Endothelial cell of umbilical vein (primary cell): ENCODE measurements at regions of chr4 and their contacts with region 1.

Region 1: DNA sequence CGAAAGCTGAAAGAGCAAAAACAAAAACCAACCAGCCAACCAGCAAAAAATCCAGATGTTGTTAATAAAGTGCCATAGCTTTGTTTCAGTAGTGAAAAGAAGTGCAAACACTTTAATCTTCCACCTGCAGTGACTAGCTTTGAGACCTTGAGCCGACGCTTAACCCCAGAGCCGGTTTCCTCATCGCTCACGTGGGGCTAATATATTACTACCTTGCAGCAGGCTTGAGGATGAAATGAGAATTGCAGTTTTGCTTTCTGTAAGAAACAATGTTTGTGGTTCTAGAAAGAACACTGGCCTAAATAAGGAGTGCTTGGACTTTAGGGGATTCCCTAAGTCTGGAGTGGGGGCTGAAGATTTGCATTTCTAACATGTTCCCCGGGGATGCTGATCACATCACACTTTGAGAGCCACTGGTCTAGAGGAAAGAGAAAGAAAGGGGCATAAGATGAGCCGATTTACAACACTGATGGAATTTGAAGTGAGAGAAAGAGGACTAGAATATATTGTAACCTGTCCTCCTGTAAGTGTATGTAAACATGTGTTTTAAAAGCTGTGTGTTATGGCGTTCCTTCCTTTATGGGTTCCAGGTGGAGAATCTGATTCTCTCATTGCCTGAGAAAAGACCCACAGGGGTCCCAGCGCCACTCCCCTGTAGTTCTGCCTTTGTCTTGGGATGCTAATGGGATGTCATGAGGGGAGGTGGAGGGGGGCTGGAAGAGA is 1.4 kb downstream of the FGF2 start:
- DNase-seq: peak; percentile 71
- H3K4me3 ChIP-seq: peak overlapping the region; percentile 74 to 86 (median 75)
- H3K27ac ChIP-seq: peak overlapping the region; percentile 2
- H3K4me1 ChIP-seq: peaks cover 8% of the 10 kb centered on the region
- H3K27me3 ChIP-seq: no peaks in the 10 kb centered on the region
- CTCF ChIP-seq: no peak
- POLR2A ChIP-seq: no peak

Region 2: GRCh38 chr4:122764821-122765215 is 63.2 kb before region 1 on chr4:
- CTCF ChIA-PET with region 1: interaction called, 3 read pairs
- POLR2A ChIA-PET with region 1: no interaction called
- dilution Hi-C with region 1: no loop called
- intact Hi-C with region 1: loop called (anchors 2 kb)
- DNase-seq: peak; percentile 44
- H3K4me3 ChIP-seq: no peak overlapping the region
- H3K27ac ChIP-seq: peak overlapping the region; percentile 58
- H3K4me1 ChIP-seq: peaks cover 16% of the 10 kb centered on the region
- H3K27me3 ChIP-seq: no peaks in the 10 kb centered on the region
- CTCF ChIP-seq: no peak
- POLR2A ChIP-seq: no peak

Region 3: DNA sequence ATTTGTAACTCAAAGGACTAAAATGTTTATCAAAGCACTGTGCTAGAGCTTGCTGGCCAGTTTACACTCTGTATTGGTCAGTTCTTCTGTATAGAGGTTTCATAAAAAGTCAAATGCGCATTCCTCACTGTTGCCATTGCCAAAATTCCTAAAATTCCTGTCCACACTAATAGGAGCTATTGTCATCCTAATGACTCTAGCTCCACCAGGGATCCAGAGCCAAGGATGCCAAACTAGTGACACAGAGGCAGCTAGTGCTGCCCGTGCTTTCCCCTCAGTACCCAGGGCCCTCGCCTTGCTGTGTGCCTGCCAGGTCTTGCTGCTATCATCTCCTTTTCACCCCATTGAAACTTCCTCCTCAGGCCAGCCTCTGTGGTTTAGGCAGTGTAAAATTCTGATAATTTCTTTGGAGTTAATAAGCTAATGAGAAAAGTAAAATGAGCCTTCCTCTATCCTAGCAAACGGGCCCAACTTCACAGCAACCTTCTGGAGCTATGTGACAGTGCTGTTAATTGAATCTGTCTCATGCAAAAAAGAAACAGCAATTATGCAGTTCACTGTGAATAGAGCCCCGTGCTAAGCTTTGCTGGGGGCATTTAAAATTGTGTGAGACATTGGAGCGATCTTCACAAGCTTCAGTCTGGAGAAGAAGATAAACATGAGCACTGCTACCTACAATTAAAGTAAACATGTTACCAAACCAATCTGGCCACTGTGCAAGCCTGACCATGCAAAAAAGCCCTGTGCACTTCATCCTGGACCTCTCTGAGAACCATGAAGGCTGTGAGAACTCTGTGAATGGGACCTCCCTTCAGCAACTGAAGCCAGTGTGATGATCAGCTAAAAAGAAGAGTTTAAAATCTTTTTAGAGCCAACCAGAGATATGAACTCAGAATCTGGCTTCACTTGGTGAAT is 44.5 kb before region 1 on chr4:
- CTCF ChIA-PET with region 1: no interaction called
- POLR2A ChIA-PET with region 1: no interaction called
- dilution Hi-C with region 1: no loop called
- intact Hi-C with region 1: loop called (anchors 1 kb)
- DNase-seq: peak; percentile 86
- H3K4me3 ChIP-seq: no peak overlapping the region
- H3K27ac ChIP-seq: peak overlapping the region; percentile 64
- H3K4me1 ChIP-seq: peaks cover 20% of the 10 kb centered on the region
- H3K27me3 ChIP-seq: no peaks in the 10 kb centered on the region
- CTCF ChIP-seq: no peak
- POLR2A ChIP-seq: peak; percentile 13

Region 4: GRCh38 chr4:122798101-122798500 is 29.9 kb before region 1 on chr4:
- CTCF ChIA-PET with region 1: interaction called, 4 read pairs
- POLR2A ChIA-PET with region 1: no interaction called
- dilution Hi-C with region 1: no loop called
- intact Hi-C with region 1: loop called (anchors 2 kb)
- DNase-seq: peak; percentile 84
- H3K4me3 ChIP-seq: no peak overlapping the region
- H3K27ac ChIP-seq: peak overlapping the region; percentile 58
- H3K4me1 ChIP-seq: peaks cover 7% of the 10 kb centered on the region
- H3K27me3 ChIP-seq: no peaks in the 10 kb centered on the region
- CTCF ChIP-seq: peak in 1 of 2 donors; percentile 2
- POLR2A ChIP-seq: no peak

Region 5: DNA sequence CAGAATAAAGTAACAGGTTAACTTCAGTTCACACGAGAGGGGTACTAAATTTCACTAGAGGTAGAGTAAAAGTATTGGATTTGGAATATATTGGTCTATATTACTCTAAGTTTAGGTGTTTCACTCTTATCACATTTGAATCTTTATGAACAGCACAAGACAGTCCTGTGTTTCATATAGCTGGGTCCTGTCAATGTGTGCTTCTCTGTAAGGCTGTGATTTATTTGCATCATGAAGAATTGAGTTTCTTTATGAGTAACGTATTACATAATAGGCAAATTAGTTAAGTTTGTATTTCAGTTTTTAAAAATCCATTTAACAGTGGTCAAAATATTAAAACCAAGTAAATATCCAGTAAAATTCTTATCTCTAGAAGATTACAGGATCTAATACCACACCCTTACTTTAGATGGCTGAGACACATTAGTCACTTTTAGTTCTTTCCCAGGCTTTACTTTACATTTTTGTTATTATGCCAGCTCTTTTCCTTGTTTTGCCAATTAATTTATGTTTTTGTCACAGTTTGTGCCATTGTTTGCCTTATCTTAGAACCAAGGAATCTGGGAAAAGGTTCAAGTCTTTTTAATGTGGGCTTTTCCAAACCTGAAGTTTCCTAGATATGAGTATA is 62.2 kb after region 1 on chr4:
- CTCF ChIA-PET with region 1: interaction called, 4 read pairs
- POLR2A ChIA-PET with region 1: no interaction called
- dilution Hi-C with region 1: no loop called
- intact Hi-C with region 1: loop called (anchors 2 kb)
- DNase-seq: peak; percentile 92
- H3K4me3 ChIP-seq: no peak overlapping the region
- H3K27ac ChIP-seq: peak overlapping the region; percentile 66
- H3K4me1 ChIP-seq: peaks cover 26% of the 10 kb centered on the region
- H3K27me3 ChIP-seq: no peaks in the 10 kb centered on the region
- CTCF ChIP-seq: no peak
- POLR2A ChIP-seq: no peak

Region 6: GRCh38 chr4:122898370-122899150 is 70.5 kb after region 1 on chr4:
- CTCF ChIA-PET with region 1: interaction called, 3 read pairs
- POLR2A ChIA-PET with region 1: no interaction called
- dilution Hi-C with region 1: no loop called
- intact Hi-C with region 1: loop called (anchors 2 kb)
- DNase-seq: peak; percentile 90
- H3K4me3 ChIP-seq: no peak overlapping the region
- H3K27ac ChIP-seq: peak overlapping the region; percentile 76
- H3K4me1 ChIP-seq: peaks cover 33% of the 10 kb centered on the region
- H3K27me3 ChIP-seq: no peaks in the 10 kb centered on the region
- CTCF ChIP-seq: no peak
- POLR2A ChIP-seq: peak; percentile 24